Caco-2 (cell line): ENCODE measurements at regions of chr11 and their contacts with region 1.

Region 1: GRCh38 chr11:36899800-36900199 is 301.8 kb upstream of the RAG2 start:
- DNase-seq: no peak
- H3K4me3 ChIP-seq: no peak overlapping the region
- H3K4me3 Mint-ChIP-seq: no peak overlapping the region
- H3K27ac Mint-ChIP-seq: no peak overlapping the region
- H3K4me1 ChIP-seq: no peaks in the 10 kb centered on the region
- H3K4me1 Mint-ChIP-seq: no peaks in the 10 kb centered on the region
- H3K27me3 ChIP-seq: no peaks in the 10 kb centered on the region
- H3K27me3 Mint-ChIP-seq: peaks cover 4% of the 10 kb centered on the region
- CTCF ChIP-seq: no peak

Region 2: DNA sequence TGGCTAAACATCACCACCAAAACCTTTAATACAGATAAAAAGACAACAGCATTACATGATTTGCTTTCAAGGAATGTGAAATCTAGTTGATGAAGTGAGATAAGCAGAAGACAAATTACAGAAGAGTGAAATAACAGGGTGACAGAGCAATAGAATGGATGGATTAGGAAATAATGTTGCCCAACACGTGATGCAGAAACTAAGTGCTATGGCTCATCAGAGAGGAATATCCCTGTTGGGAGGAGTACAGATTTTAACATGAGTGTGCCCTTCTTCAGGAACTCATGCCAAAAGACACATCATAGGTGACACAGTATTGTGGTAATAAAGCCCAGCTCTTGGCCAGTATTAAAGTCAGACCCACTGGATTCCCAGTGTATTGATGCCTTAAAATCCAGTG is 125.2 kb before region 1 on chr11:
- CTCF ChIA-PET with region 1: no interaction called
- POLR2A ChIA-PET with region 1: no interaction called
- intact Hi-C with region 1: loop called (anchors 10 kb)
- DNase-seq: no peak
- H3K4me3 ChIP-seq: no peak overlapping the region
- H3K4me3 Mint-ChIP-seq: no peak overlapping the region
- H3K27ac Mint-ChIP-seq: no peak overlapping the region
- H3K4me1 ChIP-seq: no peaks in the 10 kb centered on the region
- H3K4me1 Mint-ChIP-seq: no peaks in the 10 kb centered on the region
- H3K27me3 ChIP-seq: no peaks in the 10 kb centered on the region
- H3K27me3 Mint-ChIP-seq: peaks cover 2% of the 10 kb centered on the region
- CTCF ChIP-seq: no peak